MCF 10A (cell line): ENCODE measurements at regions of chr3 and their contacts with region 1.

Region 1: GRCh38 chr3:180855364-180855763 is 57.1 kb upstream of the FXR1 start:
- DNase-seq: peak; percentile 32
- H3K4me3 Mint-ChIP-seq: no peak overlapping the region
- H3K27ac Mint-ChIP-seq: no peak overlapping the region
- H3K4me1 Mint-ChIP-seq: no peaks in the 10 kb centered on the region
- H3K27me3 Mint-ChIP-seq: peaks cover 11% of the 10 kb centered on the region
- CTCF ChIP-seq: peak; percentile 31

Region 2: DNA sequence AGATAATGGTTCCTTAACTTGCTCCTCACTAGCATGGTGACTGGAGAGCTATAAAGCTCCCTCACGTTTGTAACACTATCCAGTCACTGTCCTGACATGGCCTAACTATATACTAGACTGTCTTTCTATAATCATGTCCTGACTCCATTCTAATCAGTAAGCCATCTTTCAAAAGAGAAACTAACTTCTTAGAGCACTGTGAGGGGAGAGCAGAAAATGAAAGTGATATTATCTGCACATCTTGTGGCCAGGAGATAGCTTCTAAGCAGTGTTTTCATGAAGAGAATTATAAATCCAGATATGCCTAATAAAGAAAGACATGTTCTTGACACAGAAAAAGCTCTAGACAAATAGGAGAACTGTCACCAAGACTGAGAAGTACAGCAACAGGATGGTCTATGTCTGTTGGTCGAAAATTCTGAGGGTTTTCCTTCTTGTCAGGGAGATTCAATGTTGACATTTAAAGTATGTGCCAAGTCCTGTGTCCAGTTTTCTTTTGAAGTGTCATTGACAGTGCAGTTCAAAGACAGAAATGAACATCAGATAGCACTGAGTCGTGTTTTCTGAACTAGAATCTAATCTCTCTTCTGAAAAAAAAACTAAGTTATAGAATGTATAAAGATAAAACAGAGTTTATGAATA is 588.0 kb before region 1 on chr3:
- CTCF ChIA-PET with region 1: no interaction called
- POLR2A ChIA-PET with region 1: no interaction called
- intact Hi-C with region 1: no loop called
- DNase-seq: no peak
- H3K4me3 Mint-ChIP-seq: peak overlapping the region; percentile 53
- H3K27ac Mint-ChIP-seq: peak overlapping the region; percentile 86
- H3K4me1 Mint-ChIP-seq: peaks cover 12% of the 10 kb centered on the region
- H3K27me3 Mint-ChIP-seq: no peaks in the 10 kb centered on the region
- CTCF ChIP-seq: no peak

Region 3: DNA sequence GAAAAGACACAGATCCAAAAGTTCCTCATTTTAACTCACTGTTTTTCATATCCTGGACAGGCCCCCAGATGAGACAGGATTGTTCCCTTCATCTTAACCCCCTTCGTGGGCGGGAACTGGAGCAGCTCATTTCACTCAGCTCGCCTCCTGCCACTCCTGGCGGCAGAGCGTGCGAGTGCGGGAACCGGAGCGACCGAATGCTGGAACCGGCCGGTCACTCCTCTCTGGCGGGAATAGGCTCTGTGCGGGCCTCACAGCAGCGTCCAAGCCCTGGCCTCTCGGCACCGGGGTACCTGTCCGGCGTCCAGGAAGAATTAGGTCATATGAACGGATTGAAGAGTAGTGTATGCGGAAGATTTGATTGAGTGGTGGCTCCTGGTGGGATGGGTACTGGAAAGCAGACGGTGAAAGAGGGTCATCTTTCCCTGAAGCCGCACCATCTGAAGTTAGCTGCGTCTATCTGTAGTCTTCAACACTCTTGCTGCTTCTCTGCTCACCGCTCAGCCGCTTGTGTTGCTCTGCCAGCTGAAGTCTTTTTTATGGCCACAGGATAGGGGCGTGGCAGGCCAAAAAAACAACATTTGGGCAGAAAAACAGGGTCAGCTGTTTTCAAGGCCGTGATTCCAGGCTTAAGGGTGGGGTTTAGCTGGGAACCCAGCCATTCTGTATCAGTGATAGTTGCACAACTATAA is 14.8 kb after region 1 on chr3:
- CTCF ChIA-PET with region 1: interaction called, 18 read pairs
- POLR2A ChIA-PET with region 1: no interaction called
- intact Hi-C with region 1: no loop called
- DNase-seq: no peak
- H3K4me3 Mint-ChIP-seq: no peak overlapping the region
- H3K27ac Mint-ChIP-seq: no peak overlapping the region
- H3K4me1 Mint-ChIP-seq: peaks cover 14% of the 10 kb centered on the region
- H3K27me3 Mint-ChIP-seq: no peaks in the 10 kb centered on the region
- CTCF ChIP-seq: no peak